Naive thymus-derived CD8-positive, alpha-beta T cell (primary cell): ENCODE measurements at regions of chr10 and their contacts with region 1.

Region 1: GRCh38 chr10:122419876-122420623 is 34.4 kb upstream of the ARMS2 start:
- DNase-seq: no peak
- ATAC-seq: no peak
- H3K4me3 Mint-ChIP-seq: peak overlapping the region in 7 of 10 donors; percentile 33 to 79 (median 51)
- H3K27ac Mint-ChIP-seq: peak overlapping the region in 9 of 10 donors; percentile 65 to 98 (median 93)
- H3K4me1 Mint-ChIP-seq: peaks cover 25 to 94% (median 72%) of the 10 kb centered on the region in 4 donors
- H3K27me3 Mint-ChIP-seq: no peaks in the 10 kb centered on the region

Region 2: DNA sequence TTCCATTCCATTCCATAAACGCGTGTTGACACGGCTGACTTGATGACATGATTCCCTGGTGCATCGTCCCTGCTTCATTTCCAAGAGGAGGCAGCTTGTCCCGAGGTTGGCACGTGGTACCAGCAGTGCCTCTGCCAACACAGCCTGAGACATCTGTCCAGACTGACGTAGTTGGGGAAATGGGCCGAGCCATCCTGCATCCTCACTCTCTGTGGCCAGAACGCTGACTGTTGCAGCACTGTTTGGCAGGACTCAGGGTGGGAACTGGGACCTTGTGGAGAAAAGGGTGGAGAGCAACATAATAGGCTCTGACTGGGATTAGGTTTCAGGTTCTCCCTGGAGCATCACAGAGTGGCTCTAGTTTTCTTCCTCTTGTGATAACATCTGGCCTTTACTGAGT is 267.5 kb before region 1 on chr10:
- POLR2A ChIA-PET with region 1: no interaction called
- DNase-seq: no peak
- ATAC-seq: no peak
- H3K4me3 Mint-ChIP-seq: no peak overlapping the region
- H3K27ac Mint-ChIP-seq: no peak overlapping the region
- H3K4me1 Mint-ChIP-seq: peaks cover 0 to 2% (median 0%) of the 10 kb centered on the region in 4 donors
- H3K27me3 Mint-ChIP-seq: peaks cover 5 to 31% (median 13%) of the 10 kb centered on the region in 5 donors

Region 3: DNA sequence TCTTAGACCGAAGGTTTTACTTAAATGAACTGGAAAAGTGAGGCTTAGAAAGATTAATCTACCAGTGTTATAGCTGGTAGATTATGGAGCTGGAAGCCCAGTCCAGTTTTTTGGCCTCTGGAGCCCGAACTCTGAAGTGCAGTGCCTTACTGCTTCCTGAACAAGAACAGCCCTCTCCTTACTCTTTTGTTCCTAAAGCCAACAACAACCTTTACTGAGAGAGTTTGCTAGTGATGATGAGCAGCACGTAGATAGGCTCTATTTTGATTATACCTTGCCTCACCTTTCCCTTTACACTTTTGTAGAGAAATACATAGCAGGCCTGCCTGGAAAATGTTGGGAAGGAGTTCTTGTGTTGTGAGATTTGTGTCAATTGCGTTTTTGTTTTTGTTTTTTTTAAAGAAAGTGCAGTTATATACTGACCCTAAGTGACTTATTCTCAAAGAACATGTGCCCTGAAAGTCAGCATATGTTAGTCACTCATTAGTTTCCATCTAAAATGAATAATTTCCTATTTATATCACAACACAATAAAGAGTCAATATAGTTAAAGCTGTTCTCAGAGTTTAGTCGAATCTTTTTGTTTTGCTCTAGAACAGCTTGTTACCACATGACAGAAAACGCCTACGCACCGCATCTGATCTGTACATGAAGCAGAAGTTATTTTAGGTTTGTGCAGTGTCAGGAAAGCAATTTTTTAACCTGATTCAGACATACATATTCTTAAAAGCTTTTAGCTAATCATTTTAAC is 12.5 kb before region 1 on chr10:
- POLR2A ChIA-PET with region 1: interaction called, 14 read pairs
- DNase-seq: peak in 9 of 10 donors; percentile 15 to 77 (median 47)
- ATAC-seq: peak; percentile 93
- H3K4me3 Mint-ChIP-seq: peak overlapping the region; percentile 20 to 73 (median 59)
- H3K27ac Mint-ChIP-seq: peak overlapping the region in 9 of 10 donors; percentile 38 to 90 (median 85)
- H3K4me1 Mint-ChIP-seq: peaks cover 23 to 56% (median 41%) of the 10 kb centered on the region in 4 donors
- H3K27me3 Mint-ChIP-seq: no peaks in the 10 kb centered on the region